ENCODE measurements at regions of chr10 and their contacts with region 1.

Region 1: DNA sequence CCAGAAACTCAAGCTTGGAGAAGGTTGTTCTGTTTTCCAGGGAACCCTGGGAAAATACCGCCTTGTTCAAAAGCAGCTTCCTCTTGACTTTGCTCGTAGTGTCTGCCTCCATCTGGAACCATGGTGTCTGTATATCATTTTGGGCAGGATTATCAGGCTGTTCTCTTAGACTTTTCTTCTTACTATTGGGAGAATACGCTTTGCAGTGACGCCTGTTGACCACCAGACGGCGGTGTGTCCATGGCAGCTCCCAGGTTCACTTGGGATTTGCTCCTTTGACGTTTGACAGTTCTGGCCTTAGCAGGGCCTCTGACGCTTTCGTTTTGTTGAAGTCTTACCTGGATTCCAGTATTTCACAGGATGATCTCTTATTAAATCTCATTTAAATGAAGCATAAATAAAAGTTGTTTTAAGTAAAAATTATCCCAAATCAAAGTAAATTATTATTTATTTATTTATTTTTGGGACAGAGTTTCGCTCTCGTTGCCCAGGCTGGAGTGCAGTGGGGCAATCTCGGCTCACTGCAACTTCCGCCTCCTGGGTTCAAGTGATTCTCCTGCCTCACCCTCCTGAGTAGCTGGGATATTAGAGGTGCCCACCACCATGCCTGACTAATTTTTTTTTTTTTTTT is 41.8 kb upstream of the GJD4 start:
- DNase-seq: no peak

Region 2: DNA sequence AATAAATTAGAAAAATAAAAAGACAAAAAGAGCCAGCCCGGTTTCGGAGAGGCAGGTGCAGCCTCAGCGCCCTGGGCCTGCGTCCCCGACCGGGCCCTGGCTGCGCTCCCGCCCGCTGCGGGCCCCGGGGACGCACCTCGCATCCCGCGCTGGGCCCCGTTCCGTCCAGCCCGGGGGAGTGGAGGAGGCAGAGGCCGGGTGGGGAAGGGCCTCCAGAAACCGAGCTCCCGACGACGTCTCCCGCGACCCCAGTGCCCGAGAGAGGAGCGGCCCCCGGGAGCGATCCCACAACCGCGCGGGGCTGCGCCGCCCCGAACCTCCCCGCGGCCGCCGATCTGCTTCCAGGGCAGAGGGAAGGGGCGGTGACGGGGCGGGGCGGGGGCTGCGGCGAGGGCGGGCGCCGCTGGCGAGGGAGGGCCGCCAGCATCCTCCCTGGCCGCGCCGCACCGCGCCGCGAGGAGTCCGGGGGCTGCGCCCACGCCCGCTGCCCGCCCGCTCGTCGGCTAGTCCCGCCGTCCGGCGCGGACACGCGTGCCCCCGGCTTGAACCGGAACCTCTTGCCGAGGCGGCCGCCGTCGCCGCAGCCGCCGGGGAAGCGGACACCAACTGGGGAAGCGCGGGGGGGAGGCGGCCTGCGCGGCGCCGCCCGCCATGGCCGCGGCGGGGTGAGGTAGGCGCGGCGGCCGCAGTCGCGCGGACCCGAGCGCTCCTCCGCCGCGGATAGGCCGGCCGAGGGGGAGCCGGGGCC is 227.1 kb before region 1 on chr10 and contains the start of gene CCNY:
- intact Hi-C with region 1: loop called in 1 of 2 experiments (anchors 10 kb)
- DNase-seq: peak; percentile 92
- total RNA-seq, gene CCNY: 65.8 to 66.4 TPM

Region 3: GRCh38 chr10:35516102-35516670 is 47.2 kb before region 1 on chr10:
- intact Hi-C with region 1: no loop called
- DNase-seq: no peak

Region 4: GRCh38 chr10:36880898-36881297 is 1317.5 kb after region 1 on chr10:
- intact Hi-C with region 1: no loop called
- DNase-seq: no peak